Heart right ventricle (tissue), 16 donors: ENCODE measurements at regions of chr5 and their contacts with region 1.

Region 1: GRCh38 chr5:67648201-67648671 is 451.6 kb upstream of the CD180 start:
- DNase-seq: peak; percentile 73 to 74
- ATAC-seq: peak; percentile 84 to 99 (median 94)
- H3K4me3 ChIP-seq: no peak overlapping the region
- H3K27ac ChIP-seq: peak overlapping the region in 7 of 10 donors; percentile 2 to 81 (median 62)
- H3K4me1 ChIP-seq: peaks cover 0 to 31% (median 13%) of the 10 kb centered on the region in 9 donors
- H3K27me3 ChIP-seq: no peaks in the 10 kb centered on the region
- CTCF ChIP-seq: no peak

Region 2: GRCh38 chr5:67537439-67538148 is 110.6 kb before region 1 on chr5:
- intact Hi-C with region 1: loop called in 1 of 10 experiments (anchors 10 kb)
- DNase-seq: no peak
- ATAC-seq: peak in 4 of 8 donors; percentile 46 to 67 (median 58)
- H3K4me3 ChIP-seq: peak overlapping the region in 6 of 10 donors; percentile 6 to 26 (median 18)
- H3K27ac ChIP-seq: peak overlapping the region in 4 of 10 donors; percentile 10 to 46 (median 20)
- H3K4me1 ChIP-seq: peaks cover 0 to 15% (median 9%) of the 10 kb centered on the region in 9 donors
- H3K27me3 ChIP-seq: no peaks in the 10 kb centered on the region
- CTCF ChIP-seq: no peak

Region 3: GRCh38 chr5:67809589-67809988 is 161.4 kb after region 1 on chr5:
- intact Hi-C with region 1: loop called in 1 of 10 experiments (anchors 5 kb)
- DNase-seq: no peak
- ATAC-seq: no peak
- H3K4me3 ChIP-seq: no peak overlapping the region
- H3K27ac ChIP-seq: peak overlapping the region in 8 of 10 donors; percentile 13 to 88 (median 80)
- H3K4me1 ChIP-seq: peaks cover 2 to 41% (median 18%) of the 10 kb centered on the region in 9 donors
- H3K27me3 ChIP-seq: no peaks in the 10 kb centered on the region
- CTCF ChIP-seq: no peak

Region 4: DNA sequence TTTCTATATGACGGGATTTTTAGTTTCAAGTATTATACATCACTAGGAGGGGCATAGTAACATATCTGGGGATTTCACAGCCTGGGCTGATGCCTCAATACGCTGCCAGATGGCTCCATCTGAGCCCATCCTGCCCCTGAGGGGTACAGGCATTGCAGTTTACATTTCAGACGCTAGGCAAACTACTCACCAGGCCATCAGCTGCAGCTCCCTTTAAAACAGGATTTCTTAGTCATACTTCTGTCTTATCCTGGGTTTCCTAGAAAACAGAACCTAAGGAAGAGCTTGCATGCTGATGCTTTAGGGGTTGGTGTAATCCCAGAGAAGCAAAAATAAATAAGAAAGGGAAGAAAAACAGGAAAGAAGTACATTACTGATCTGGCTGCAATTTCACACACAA is 194.6 kb after region 1 on chr5:
- intact Hi-C with region 1: no loop called
- DNase-seq: no peak
- ATAC-seq: no peak
- H3K4me3 ChIP-seq: no peak overlapping the region
- H3K27ac ChIP-seq: no peak overlapping the region
- H3K4me1 ChIP-seq: no peaks in the 10 kb centered on the region
- H3K27me3 ChIP-seq: no peaks in the 10 kb centered on the region
- CTCF ChIP-seq: no peak

Region 5: DNA sequence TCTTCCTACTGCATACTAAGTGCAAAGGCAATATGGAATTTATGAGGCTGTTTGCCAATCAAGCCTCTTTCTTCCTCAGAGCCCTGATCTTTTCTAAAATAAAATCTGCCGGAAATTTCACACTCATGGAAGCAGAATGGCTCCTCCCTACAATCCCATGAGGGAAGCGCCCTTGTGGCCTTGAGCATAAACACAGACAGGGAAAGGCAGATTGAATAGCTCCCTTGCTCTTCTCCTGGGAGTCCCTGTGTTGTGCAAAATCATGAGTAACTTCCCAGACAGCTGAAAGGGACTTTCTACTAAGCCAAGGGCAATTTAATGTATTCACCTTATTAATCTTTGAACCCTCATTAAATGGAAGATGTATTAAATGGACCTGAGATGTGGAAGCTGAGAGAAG is 341.2 kb after region 1 on chr5:
- intact Hi-C with region 1: loop called in 1 of 10 experiments (anchors 5 kb)
- DNase-seq: peak in 1 of 2 donors; percentile 48
- ATAC-seq: peak; percentile 71 to 90 (median 82)
- H3K4me3 ChIP-seq: no peak overlapping the region
- H3K27ac ChIP-seq: no peak overlapping the region
- H3K4me1 ChIP-seq: peaks cover 0 to 47% (median 32%) of the 10 kb centered on the region in 9 donors
- H3K27me3 ChIP-seq: no peaks in the 10 kb centered on the region
- CTCF ChIP-seq: peak in 1 of 9 donors; percentile 7

Region 6: GRCh38 chr5:68261569-68262065 is 613.4 kb after region 1 on chr5:
- intact Hi-C with region 1: loop called in 1 of 10 experiments (anchors 10 kb)
- DNase-seq: no peak
- ATAC-seq: peak in 1 of 8 donors; percentile 23
- H3K4me3 ChIP-seq: no peak overlapping the region
- H3K27ac ChIP-seq: peak overlapping the region; percentile 18 to 86 (median 70)
- H3K4me1 ChIP-seq: peaks cover 32 to 96% (median 94%) of the 10 kb centered on the region in 9 donors
- H3K27me3 ChIP-seq: no peaks in the 10 kb centered on the region
- CTCF ChIP-seq: peak in 4 of 9 donors; percentile 23 to 43 (median 36)